ENCODE measurements at regions of chr3 and their contacts with region 1.

Region 1: GRCh38 chr3:191420771-191421170 is 40.2 kb upstream of the PYDC2 start:
- DNase-seq: no peak
- H3K4me3 ChIP-seq: no peak overlapping the region
- H3K27ac ChIP-seq: no peak overlapping the region
- H3K4me1 ChIP-seq: no peaks in the 10 kb centered on the region
- H3K27me3 ChIP-seq: no peaks in the 10 kb centered on the region
- CTCF ChIP-seq: no peak
- POLR2A ChIP-seq: no peak

Region 2: GRCh38 chr3:190224863-190225692 is 1195.7 kb before region 1 on chr3:
- intact Hi-C with region 1: no loop called
- DNase-seq: no peak
- H3K4me3 ChIP-seq: no peak overlapping the region
- H3K27ac ChIP-seq: no peak overlapping the region
- H3K4me1 ChIP-seq: no peaks in the 10 kb centered on the region
- H3K27me3 ChIP-seq: no peaks in the 10 kb centered on the region
- CTCF ChIP-seq: peak in 1 of 3 experiments; percentile 8
- POLR2A ChIP-seq: no peak

Region 3: DNA sequence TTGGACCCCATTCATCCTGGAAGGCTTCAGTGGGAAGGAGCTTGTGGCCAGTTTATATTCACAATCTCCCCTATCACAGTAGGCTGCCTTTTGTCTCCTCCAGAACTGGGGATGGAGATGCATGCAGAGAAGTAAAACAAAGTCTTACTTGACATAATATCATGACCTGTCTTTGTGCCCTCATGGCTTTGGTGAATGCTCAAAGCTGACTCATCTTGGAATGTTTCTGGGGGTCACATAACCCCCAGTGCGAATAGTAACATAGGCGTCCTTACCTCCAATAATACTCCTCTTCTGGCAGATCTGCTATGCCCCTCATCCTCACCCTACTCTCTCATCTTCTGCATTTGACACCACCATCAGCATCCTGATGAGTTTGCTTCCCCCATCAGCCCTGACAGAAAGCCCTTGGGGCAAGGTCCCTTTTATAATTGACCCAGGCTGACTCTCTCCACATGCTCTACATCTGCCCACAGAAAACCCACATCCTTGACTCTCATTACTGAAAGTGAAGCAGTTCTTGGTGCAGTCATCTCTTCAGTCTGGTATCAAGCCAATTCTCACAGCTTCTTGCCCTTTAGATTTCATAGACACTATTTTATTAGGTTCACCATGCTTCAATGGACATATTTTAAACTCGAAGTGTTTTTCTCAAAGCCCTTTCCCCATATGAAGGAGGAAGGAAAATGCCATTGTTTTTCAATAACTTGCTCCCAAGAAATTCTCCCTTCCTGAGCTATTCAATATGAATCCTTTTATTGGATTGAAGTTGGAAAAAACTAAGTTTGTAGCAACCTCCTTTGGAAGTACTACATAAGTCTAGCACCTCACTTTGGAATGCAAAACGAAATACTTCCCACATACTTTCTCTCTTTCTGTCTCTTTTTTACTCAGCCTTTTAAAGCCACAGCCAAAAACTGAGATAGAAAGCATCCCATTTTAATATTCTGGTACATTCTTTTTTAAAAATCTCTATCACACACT is 185.1 kb before region 1 on chr3:
- intact Hi-C with region 1: no loop called
- DNase-seq: no peak
- H3K4me3 ChIP-seq: no peak overlapping the region
- H3K27ac ChIP-seq: no peak overlapping the region
- H3K4me1 ChIP-seq: no peaks in the 10 kb centered on the region
- H3K27me3 ChIP-seq: no peaks in the 10 kb centered on the region
- CTCF ChIP-seq: no peak
- POLR2A ChIP-seq: no peak

Region 4: DNA sequence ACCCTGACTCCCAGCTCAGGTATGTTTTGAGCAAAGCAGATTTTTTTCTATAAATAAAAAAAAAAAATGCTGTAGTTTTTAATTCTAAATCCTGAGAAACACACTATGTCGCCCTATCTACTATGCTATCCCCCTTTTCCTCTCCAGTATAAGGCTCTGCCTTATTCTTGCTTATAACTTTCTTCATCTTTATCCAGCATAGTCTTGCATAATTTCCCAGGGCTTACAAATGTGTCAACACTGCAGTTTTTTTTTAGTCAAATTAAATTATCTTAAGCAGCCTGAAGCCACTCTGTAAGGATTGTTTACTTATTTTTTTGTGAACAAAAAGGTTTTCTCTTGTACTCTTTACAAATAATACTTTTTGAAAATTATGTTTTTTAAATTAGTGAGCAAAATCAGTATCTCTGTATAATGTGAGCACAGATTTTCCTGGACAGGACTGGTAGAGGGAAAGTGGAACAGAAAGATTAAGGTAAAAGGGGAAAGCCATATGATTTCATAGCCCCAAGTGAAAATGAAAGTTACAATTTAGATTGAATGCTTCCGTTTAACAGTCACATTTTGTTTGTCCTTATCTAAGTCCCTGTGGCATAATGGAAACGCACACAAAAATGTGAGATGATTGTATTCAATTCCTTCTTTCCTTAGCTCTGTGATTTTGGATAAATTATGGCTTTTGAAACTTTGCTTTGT is 34.6 kb after region 1 on chr3:
- intact Hi-C with region 1: loop called (anchors 1 kb)
- DNase-seq: no peak
- H3K4me3 ChIP-seq: no peak overlapping the region
- H3K27ac ChIP-seq: no peak overlapping the region
- H3K4me1 ChIP-seq: no peaks in the 10 kb centered on the region
- H3K27me3 ChIP-seq: no peaks in the 10 kb centered on the region
- CTCF ChIP-seq: no peak
- POLR2A ChIP-seq: no peak

Measured in vagina (tissue), 2 donors.